BJ (cell line): ENCODE measurements at regions of chr16 and their contacts with region 1.

Region 1: GRCh38 chr16:87076950-87077749 is 240.0 kb downstream of the C16orf95 start:
- DNase-seq: no peak
- H3K4me3 ChIP-seq: no peak overlapping the region
- H3K27me3 ChIP-seq: no peaks in the 10 kb centered on the region; the same call in 1 of the 2 replicates
- CTCF ChIP-seq: peak; percentile 79

Region 2: GRCh38 chr16:87056083-87056482 is 21.1 kb before region 1 on chr16:
- CTCF ChIA-PET with region 1: interaction called, 28 read pairs
- POLR2A ChIA-PET with region 1: interaction called, 12 read pairs
- DNase-seq: no peak
- H3K4me3 ChIP-seq: no peak overlapping the region
- H3K27me3 ChIP-seq: peaks cover 7% of the 10 kb centered on the region
- CTCF ChIP-seq: peak; percentile 37

Region 3: DNA sequence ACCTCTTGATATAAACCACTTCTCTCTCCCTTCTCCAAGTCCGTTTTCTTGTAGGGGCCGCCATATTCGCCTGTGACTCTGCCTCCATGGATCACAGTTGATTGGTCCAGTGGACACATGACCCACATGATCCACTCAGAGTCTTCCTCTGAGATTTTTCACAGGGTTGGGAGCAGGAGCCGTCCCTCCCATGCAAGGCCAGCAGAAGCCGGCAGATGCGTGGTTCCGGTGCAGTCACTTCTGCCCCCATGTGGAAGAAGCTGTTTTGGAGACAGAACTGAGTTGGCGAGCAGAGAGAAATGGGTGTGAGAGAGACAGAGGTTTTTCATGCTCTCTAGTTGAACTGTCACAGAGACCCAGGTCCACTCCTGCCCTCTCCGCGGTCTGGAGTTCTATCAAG is 156.8 kb after region 1 on chr16:
- CTCF ChIA-PET with region 1: no interaction called
- POLR2A ChIA-PET with region 1: no interaction called
- DNase-seq: no peak
- H3K4me3 ChIP-seq: no peak overlapping the region
- H3K27me3 ChIP-seq: no peaks in the 10 kb centered on the region
- CTCF ChIP-seq: peak; percentile 46